Heart right ventricle (tissue), 16 donors: ENCODE measurements at regions of chr7 and their contacts with region 1.

Region 1: GRCh38 chr7:99767662-99768061 is 16.3 kb downstream of the CYP3A4 start:
- DNase-seq: no peak
- ATAC-seq: no peak
- H3K4me3 ChIP-seq: no peak overlapping the region
- H3K27ac ChIP-seq: no peak overlapping the region
- H3K4me1 ChIP-seq: peaks cover 0 to 3% (median 0%) of the 10 kb centered on the region in 9 donors
- H3K27me3 ChIP-seq: peaks cover 0 to 16% (median 0%) of the 10 kb centered on the region in 7 donors
- CTCF ChIP-seq: no peak

Region 2: GRCh38 chr7:99752390-99752789 is 15.3 kb before region 1 on chr7:
- intact Hi-C with region 1: loop called in 1 of 10 experiments (anchors 2 kb)
- DNase-seq: no peak
- ATAC-seq: no peak
- H3K4me3 ChIP-seq: no peak overlapping the region
- H3K27ac ChIP-seq: no peak overlapping the region
- H3K4me1 ChIP-seq: no peaks in the 10 kb centered on the region
- H3K27me3 ChIP-seq: no peaks in the 10 kb centered on the region
- CTCF ChIP-seq: no peak